ENCODE measurements at regions of chr3 and their contacts with region 1.

Region 1: DNA sequence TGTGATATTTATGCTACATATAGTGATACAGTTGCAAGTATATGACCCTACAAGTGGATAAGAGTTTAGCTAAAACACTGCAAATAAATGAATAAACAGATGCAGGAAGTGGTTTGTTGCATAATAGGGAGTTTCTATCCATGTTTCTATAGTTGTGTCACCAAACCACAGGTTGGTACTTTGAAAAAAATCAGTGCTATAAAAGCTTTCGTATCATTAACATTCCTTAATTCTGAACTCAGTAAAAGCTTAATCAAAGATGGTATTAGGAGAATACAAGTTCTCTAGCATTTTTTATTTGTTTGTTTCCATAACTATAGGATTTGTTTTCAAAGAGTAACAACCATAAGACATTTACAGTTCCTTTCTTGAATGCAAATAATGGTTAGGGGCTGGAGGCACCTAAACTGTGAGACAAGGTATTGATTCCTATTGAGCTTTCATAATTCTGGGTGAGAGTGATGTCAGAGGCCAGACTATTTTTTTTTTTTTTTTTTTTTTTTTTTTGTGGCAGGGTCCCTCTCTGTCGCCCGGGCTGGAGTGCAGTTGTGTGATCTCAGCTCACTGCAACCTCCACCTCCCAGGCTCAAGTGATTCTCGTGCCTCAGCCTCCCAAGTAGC is 29.6 kb downstream of the CPOX start:
- DNase-seq: no peak
- ATAC-seq: peak; percentile 58
- H3K4me3 ChIP-seq: no peak overlapping the region
- H3K4me1 ChIP-seq: no peaks in the 10 kb centered on the region
- CTCF ChIP-seq: no peak

Region 2: GRCh38 chr3:98497381-98497780 is 66.4 kb before region 1 on chr3 and contains the start of gene OR5K2:
- intact Hi-C with region 1: loop called in 1 of 2 experiments (anchors 5 kb)
- DNase-seq: no peak
- ATAC-seq: no peak
- H3K4me3 ChIP-seq: no peak within 1 kb of the TSS
- H3K4me1 ChIP-seq: no peaks in the 10 kb centered on the region
- CTCF ChIP-seq: no peak
- total RNA-seq, gene OR5K2: not detected

Region 3: DNA sequence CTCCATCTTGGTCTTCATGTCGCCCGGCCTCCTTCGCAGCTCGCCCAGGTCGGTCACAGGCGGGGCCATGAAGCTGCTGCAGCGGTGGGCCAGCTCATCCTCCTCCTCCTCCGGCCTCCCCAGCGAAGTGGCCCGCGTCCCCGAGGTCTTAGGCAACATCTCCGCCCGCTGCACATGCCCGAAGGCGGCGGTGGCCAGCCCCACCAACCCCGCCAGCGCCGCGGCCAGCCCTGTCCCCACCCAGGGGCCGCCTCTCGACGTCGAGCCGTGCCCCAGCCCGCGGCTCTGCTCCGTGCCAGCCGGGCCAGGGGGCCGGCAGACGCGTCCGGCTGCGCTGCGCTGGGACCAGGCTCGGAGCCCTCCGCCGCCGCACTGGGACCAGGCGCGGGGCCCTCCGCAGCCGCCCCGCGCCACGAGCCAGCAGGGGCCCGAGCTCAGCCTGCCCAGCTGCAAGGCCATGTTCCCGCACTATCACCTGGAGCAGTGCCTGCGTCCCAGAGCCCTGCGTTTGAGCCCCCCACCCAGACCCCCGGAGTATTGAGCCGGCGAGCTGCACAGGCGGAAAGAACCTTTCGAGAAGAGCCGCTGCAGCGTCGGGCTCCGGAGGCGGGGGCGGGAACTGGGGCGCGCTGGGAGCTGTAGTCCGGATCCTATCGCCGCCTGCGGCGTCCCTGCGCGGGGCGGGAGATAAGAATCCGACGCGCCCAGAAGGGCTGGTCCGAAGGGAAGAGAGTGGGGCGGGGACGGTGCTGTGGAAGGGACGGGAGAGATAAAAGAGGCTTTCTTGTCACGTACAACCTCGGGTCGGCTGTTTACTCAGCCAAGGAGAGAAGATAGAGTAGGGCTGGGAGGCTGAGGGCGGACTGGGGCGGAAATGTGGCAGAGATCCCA is 29.5 kb after region 1 on chr3 and contains the start of gene CPOX:
- intact Hi-C with region 1: no loop called
- DNase-seq: peak; percentile 93 to 94 (median 94)
- ATAC-seq: peak; percentile 99
- H3K4me3 ChIP-seq: peak within 1 kb of the TSS; percentile 77
- H3K4me1 ChIP-seq: peaks cover 10% of the 10 kb centered on the region
- CTCF ChIP-seq: no peak
- total RNA-seq, gene CPOX: 16.2 to 17.9 (median 17.6) TPM

Region 4: DNA sequence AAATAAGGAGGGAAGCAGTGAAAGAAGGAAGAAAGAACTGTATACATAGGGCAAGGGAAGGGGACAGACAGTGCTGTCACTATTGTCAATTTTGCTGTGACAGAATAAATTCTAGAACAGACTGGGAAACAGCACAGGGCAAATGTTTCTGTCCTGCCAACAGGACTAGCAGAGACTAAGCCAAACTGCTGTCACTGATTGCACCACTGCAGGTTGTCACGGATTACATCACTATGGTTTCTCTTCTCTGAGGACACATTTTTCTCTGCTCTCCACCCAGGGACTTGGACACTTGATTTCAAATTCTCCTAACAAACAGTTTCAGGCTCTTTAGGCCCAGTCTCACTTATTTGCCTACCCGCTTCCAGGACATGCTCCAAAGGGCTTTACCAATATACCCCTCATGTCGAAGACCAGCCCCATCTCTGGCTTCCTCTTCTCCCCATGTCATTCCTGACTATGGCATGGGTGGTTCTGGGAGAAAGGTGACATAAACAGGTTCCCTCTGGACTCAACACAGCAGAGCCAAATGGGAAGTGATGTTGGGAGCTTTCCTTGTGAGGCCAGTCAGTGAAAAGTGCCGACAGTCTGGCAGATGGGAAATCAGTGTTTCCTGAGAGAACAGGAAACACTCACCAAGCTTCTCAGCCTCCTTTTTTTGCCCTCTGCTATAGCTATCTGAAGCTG is 129.2 kb after region 1 on chr3:
- intact Hi-C with region 1: no loop called
- DNase-seq: no peak
- ATAC-seq: no peak
- H3K4me3 ChIP-seq: no peak overlapping the region
- H3K4me1 ChIP-seq: no peaks in the 10 kb centered on the region
- CTCF ChIP-seq: no peak

Measured in mucosa of descending colon (tissue), 3 donors.